ENCODE measurements at regions of chr5 and their contacts with region 1.

Region 1: DNA sequence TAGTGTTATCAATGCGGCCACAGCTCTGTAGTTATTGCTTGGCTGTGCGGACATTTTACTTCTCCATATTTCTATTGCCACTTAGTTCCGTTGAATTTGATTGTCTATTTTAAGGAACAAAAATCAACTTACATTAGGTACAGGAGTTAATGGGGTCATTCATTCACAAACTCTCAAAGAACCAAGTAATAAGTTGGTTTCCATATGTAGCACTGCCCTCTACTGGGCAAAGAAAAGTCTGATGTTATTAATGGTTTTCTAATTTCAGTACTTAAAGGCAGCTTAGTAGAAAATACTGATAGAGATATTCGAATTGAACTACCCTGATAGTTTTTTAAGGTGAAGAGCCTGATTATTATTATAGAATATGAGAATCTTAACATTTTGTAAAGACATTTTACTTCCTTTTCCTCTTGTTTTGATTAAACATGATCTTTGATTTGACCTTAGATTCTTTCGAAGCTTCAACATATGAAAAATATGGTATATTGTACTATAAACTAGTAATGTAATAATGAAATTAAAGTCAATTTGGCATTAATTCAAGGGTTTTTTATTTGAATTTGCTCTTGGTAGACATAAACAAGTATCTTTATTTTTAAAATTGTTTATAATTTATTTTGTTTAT is 119.5 kb upstream of the CTNND2 start:
- ATAC-seq: peak in 1 of 8 experiments; percentile 21
- H3K4me3 ChIP-seq: no peak overlapping the region
- H3K27ac ChIP-seq: no peak overlapping the region
- H3K4me1 ChIP-seq: no peaks in the 10 kb centered on the region

Region 2: DNA sequence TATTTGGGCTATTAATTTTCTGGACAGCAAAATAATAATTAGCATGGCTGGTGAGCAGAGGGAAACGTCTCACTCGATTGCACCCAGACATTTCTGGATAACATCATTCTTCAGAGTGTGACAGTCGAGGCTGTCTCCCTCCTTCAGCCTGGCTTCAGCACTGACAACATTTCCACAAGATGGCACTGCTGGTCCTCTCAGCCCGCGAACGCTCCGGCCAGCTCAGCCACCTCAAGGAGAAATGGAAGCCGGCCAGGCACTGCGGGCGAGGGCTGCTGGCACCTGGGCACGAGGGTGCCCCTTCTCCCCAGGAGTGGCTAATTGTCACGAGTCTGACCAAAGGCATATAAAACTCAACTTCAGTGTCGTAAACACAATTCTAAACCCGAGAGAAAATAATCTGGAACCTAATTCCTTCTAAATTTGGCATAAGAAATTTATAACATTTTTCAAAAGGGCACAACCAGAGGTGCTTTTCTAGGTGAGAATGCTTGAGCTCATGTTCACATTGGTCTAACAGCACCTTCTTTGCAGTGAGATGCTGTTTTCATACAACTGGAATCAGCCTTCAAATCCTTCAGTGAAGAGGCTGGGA is 1328.6 kb before region 1 on chr5:
- in situ Hi-C with region 1: loop called in 2 of 9 experiments (anchors 25 kb)
- ATAC-seq: peak; percentile 83 to 98 (median 96)
- H3K4me3 ChIP-seq: no peak overlapping the region
- H3K27ac ChIP-seq: no peak overlapping the region
- H3K4me1 ChIP-seq: peaks cover 6% of the 10 kb centered on the region in 2 donors

Measured in motor neuron (in vitro differentiated cells).